ENCODE measurements at regions of chr2 and their contacts with region 1.

Region 1: DNA sequence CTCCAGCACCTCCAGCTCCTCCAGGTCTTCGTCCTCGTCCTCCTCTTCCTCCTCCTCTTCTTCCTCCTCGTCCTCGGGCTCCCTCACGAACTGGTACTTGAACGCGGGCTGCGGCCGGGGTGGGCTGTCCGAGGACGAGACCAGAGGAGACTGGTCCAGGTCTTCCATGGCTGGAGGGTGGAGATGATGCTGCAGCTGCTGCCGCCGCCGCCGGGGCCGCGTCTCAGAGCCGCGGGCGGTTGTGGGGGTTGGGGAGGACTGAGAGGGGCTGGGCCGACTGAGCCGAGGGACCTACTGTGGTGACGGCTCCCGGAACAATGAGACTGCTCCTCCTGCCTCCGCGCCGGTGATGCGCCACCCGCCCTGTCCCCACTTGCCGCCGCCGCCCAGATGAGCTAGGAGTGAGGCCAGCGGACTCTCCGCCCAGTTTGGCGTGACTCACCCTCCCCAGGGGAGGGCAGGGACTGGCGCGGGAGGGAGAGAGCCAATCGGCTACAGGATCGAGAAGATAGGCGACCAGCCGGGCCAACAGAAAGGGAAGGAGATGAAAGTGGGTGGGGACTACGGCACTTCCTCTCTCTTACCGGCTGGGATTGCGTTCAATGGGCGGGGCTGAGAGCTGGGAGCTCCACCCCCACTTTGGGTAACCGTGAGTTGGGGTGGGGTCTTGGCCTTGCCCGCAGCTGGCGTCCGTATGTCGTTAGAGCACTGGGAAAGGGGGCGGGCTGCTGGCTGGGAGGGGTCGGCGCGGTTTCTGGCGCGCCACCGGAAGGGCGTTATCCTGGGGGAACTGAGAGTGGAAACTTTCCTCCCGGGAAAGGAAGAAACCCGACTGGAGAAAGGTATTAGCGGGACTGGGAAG is at the start of gene RTN4:
- DNase-seq: peak; percentile 96 to 99
- ATAC-seq: peak; percentile 87 to 97 (median 91)
- H3K4me3 ChIP-seq: peak within 1 kb of the TSS; percentile 85
- H3K4me3 Mint-ChIP-seq: peak within 1 kb of the TSS; percentile 96
- H3K27ac ChIP-seq: peak within 1 kb of the TSS; percentile 92
- H3K27ac Mint-ChIP-seq: peak within 1 kb of the TSS; percentile 93 to 99
- H3K4me1 ChIP-seq: peaks cover 23% of the 10 kb centered on the region
- H3K4me1 Mint-ChIP-seq: peaks cover 63 to 73% of the 10 kb centered on the region in 2 donors
- H3K27me3 ChIP-seq: no peaks in the 10 kb centered on the region
- H3K27me3 Mint-ChIP-seq: no peaks in the 10 kb centered on the region
- CTCF ChIP-seq: no peak
- total RNA-seq, gene RTN4: 100 to 117 (median 109) TPM

Region 2: DNA sequence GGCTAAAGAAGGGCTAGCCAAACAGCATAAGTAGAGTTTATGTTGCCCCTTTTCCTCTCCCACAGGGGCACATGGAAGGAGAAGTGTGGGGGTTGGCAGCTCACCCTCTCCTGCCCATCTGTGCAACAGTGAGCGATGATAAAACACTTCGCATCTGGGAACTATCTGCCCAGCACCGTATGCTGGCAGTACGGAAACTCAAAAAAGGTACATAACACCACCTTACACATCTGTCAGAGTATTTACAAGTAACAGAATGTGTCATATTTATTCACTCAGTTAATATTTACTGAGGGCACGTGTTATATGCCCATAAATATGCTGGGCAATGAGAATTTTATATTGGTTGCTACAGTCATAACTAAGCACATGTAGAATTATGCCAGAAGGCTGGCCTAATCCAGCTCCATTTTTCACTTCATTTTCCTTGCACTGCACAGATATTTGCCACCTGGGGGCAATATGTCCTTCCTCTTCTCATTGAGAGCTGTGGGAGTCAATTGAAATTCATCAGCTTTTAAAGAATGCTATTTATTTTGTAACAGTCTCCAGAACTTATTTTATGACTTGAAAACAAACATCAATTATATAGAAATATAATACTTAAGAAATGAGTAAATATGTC is 150.7 kb before region 1 on chr2:
- intact Hi-C with region 1: loop called (anchors 5 kb)
- DNase-seq: peak in 1 of 2 donors; percentile 51
- ATAC-seq: peak in 1 of 3 donors; percentile 43
- H3K4me3 ChIP-seq: no peak overlapping the region
- H3K4me3 Mint-ChIP-seq: no peak overlapping the region
- H3K27ac ChIP-seq: no peak overlapping the region
- H3K27ac Mint-ChIP-seq: peak overlapping the region in 1 of 2 donors; percentile 29
- H3K4me1 ChIP-seq: peaks cover 11% of the 10 kb centered on the region
- H3K4me1 Mint-ChIP-seq: peaks cover 12 to 17% of the 10 kb centered on the region in 2 donors
- H3K27me3 ChIP-seq: no peaks in the 10 kb centered on the region
- H3K27me3 Mint-ChIP-seq: peaks cover 0 to 3% of the 10 kb centered on the region in 2 donors
- CTCF ChIP-seq: peak; percentile 44

Region 3: DNA sequence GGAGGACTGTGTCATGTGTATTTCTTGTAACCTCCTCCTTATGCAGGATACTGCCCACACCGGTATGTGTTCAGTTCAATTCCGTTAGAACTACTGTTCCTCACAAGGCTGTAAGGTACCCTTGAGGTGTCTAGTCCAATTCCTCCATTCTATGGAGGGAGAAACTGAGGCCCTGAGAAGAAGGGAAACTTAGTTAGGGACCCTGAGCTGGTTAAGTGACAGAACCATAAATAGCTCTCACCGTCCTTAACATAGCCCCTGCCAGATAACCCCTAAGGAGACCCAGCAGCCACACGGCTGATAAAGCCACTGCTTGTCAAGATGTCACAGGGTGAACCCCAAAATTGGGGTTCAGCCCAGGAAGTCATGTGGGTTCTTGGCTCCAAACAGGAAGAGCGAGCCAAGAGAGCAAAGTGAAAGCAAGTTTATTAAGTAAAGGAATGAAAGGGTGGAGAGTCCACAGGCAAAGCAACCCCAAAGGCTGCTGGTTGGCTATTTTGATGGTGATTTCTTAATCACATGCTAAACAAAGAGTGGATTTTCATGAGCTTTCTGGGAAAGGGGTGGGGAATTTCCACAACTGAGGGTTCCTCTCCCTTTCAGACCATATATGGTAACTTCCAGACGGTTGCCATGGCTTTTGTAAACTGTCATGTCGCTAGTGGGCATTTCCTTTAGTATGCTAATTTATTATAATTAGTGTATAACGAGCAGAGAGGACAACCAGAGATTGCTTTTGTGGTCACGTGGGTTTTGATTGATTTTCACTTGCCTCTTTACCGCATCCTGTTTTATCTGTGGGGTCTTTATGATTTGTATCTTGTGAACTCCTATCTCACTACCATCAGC is 83.3 kb after region 1 on chr2:
- intact Hi-C with region 1: loop called (anchors 5 kb)
- DNase-seq: peak; percentile 25 to 89
- ATAC-seq: peak; percentile 85 to 93 (median 92)
- H3K4me3 ChIP-seq: peak overlapping the region; percentile 30
- H3K4me3 Mint-ChIP-seq: peak overlapping the region; percentile 91
- H3K27ac ChIP-seq: peak overlapping the region; percentile 81
- H3K27ac Mint-ChIP-seq: peak overlapping the region; percentile 85 to 90
- H3K4me1 ChIP-seq: peaks cover 14% of the 10 kb centered on the region
- H3K4me1 Mint-ChIP-seq: peaks cover 13 to 14% of the 10 kb centered on the region in 2 donors
- H3K27me3 ChIP-seq: no peaks in the 10 kb centered on the region
- H3K27me3 Mint-ChIP-seq: peaks cover 0 to 5% of the 10 kb centered on the region in 2 donors
- CTCF ChIP-seq: no peak

Region 4: DNA sequence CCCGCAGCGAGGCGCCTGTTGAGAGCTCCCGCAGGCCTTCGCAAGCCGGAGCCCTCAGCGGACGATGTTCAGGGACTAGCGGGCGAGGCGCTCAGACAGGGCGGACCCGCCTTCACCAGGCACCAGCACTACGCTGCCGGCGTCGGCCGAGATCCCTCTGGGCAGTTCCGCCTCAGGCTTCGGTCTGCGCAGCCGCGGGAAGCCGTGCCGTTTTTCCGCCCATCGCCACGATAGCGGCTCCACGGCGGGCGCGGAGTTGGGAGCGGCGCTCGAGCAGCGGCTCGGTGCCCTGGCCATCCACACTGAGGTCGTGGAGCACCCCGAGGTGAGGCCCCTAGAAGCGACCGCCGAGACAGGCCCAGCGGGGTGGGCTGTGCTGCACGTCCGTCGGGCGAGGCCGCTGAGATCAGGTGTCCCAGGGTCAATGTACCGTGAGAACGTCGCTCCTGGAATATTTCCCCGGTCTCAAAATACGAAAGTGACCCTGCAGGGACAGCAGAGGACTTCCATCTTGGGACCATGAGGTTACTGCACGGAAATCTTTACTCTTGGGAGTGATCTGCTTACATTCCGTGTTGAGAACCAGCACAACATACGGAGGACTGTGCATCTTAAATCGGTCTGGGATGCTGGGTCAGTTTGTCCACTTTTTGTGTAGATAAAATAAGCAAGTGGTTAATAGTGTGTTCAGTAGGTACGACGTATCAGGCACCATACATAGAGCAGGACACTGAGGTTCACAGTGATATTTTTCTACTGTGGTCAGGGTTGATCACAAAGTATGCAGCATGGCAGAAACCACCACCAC is 231.9 kb after region 1 on chr2:
- intact Hi-C with region 1: loop called (anchors 5 kb)
- DNase-seq: peak; percentile 79 to 94
- ATAC-seq: peak; percentile 96 to 100 (median 97)
- H3K4me3 ChIP-seq: peak overlapping the region; percentile 77
- H3K4me3 Mint-ChIP-seq: peak overlapping the region; percentile 93
- H3K27ac ChIP-seq: peak overlapping the region; percentile 80
- H3K27ac Mint-ChIP-seq: peak overlapping the region; percentile 92 to 95
- H3K4me1 ChIP-seq: peaks cover 14% of the 10 kb centered on the region
- H3K4me1 Mint-ChIP-seq: peaks cover 16% of the 10 kb centered on the region in 2 donors
- H3K27me3 ChIP-seq: no peaks in the 10 kb centered on the region
- H3K27me3 Mint-ChIP-seq: no peaks in the 10 kb centered on the region
- CTCF ChIP-seq: no peak

Region 5: GRCh38 chr2:55617175-55618024 is 567.0 kb after region 1 on chr2 and contains the start of gene PPP4R3B:
- intact Hi-C with region 1: loop called (anchors 5 kb)
- DNase-seq: peak; percentile 96 to 99
- ATAC-seq: peak; percentile 86 to 97 (median 87)
- H3K4me3 ChIP-seq: peak within 1 kb of the TSS; percentile 98
- H3K4me3 Mint-ChIP-seq: no peak within 1 kb of the TSS
- H3K27ac ChIP-seq: peak within 1 kb of the TSS; percentile 98
- H3K27ac Mint-ChIP-seq: no peak within 1 kb of the TSS
- H3K4me1 ChIP-seq: peaks cover 26% of the 10 kb centered on the region
- H3K4me1 Mint-ChIP-seq: peaks cover 30 to 44% of the 10 kb centered on the region in 2 donors
- H3K27me3 ChIP-seq: no peaks in the 10 kb centered on the region
- H3K27me3 Mint-ChIP-seq: no peaks in the 10 kb centered on the region
- CTCF ChIP-seq: no peak
- total RNA-seq, gene PPP4R3B: 65.1 to 97.9 (median 84.9) TPM